ENCODE measurements at regions of chr6 and their contacts with region 1.

Region 1: GRCh38 chr6:14734416-14735340 is 511.2 kb upstream of the JARID2 start:
- DNase-seq: peak; percentile 35
- H3K4me3 Mint-ChIP-seq: peak overlapping the region; percentile 62
- H3K27ac Mint-ChIP-seq: peak overlapping the region; percentile 96
- H3K4me1 Mint-ChIP-seq: peaks cover 96% of the 10 kb centered on the region
- H3K27me3 Mint-ChIP-seq: no peaks in the 10 kb centered on the region

Region 2: DNA sequence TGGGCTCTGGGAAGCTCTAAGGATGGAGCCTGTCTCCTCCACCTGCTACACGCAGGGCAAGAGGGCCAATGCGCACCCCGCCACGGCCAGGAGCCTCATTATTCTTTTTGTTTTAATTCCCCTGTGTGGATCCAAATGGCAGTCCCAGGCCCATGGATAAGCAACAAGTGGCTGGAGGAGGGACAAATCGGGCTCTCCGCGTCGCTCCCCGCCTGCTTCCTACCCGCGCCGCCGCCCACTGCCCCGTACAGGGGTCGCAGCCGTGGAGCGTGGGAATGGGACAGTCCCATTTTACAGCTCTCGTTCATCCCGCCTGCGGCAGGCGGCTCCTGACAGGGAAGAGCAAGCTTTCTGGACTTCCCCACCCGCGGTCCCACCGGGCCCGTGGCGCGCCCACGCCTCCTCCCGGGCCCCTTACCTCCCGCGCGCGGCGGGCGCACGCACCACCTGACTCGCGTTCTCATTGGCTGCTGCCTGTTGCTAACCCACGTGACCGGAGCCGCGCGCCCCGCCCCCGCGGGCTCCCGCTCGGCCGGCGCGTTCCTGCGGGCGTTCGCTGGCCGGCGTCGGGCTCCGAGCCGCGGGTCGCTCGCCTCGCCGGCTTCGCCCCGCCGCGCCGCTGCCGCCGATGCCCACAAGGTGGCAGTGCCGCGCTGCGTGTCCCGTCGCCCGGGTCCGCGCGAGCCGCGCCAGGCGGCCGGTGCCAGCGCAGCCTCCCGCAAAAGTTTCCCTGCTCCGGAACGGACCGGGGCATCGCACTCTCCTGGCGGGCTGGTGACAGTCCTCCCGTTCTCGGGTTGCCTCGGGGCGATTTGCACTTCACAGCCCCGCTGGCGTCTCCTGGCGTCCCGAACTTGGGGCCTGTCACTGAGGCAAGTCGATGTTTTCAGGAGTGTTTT is 523.8 kb before region 1 on chr6:
- intact Hi-C with region 1: loop called (anchors 1 kb)
- DNase-seq: peak; percentile 92
- H3K4me3 Mint-ChIP-seq: peak overlapping the region; percentile 78
- H3K27ac Mint-ChIP-seq: peak overlapping the region; percentile 83
- H3K4me1 Mint-ChIP-seq: peaks cover 40% of the 10 kb centered on the region
- H3K27me3 Mint-ChIP-seq: no peaks in the 10 kb centered on the region

Region 3: GRCh38 chr6:14542670-14543366 is 191.9 kb before region 1 on chr6:
- intact Hi-C with region 1: loop called (anchors 2 kb)
- DNase-seq: peak; percentile 23
- H3K4me3 Mint-ChIP-seq: no peak overlapping the region
- H3K27ac Mint-ChIP-seq: peak overlapping the region; percentile 76
- H3K4me1 Mint-ChIP-seq: peaks cover 31% of the 10 kb centered on the region
- H3K27me3 Mint-ChIP-seq: no peaks in the 10 kb centered on the region

Region 4: GRCh38 chr6:14660806-14661579 is 73.7 kb before region 1 on chr6:
- intact Hi-C with region 1: loop called (anchors 2 kb)
- DNase-seq: peak; percentile 52
- H3K4me3 Mint-ChIP-seq: no peak overlapping the region
- H3K27ac Mint-ChIP-seq: no peak overlapping the region
- H3K4me1 Mint-ChIP-seq: peaks cover 35% of the 10 kb centered on the region
- H3K27me3 Mint-ChIP-seq: no peaks in the 10 kb centered on the region

Region 5: GRCh38 chr6:14857501-14857900 is 122.8 kb after region 1 on chr6:
- intact Hi-C with region 1: loop called (anchors 1 kb)
- DNase-seq: peak; percentile 18
- H3K4me3 Mint-ChIP-seq: peak overlapping the region; percentile 19
- H3K27ac Mint-ChIP-seq: peak overlapping the region; percentile 92
- H3K4me1 Mint-ChIP-seq: peaks cover 46% of the 10 kb centered on the region
- H3K27me3 Mint-ChIP-seq: no peaks in the 10 kb centered on the region

Region 6: GRCh38 chr6:15245361-15246216 is 510.9 kb after region 1 on chr6 and contains the start of gene JARID2:
- intact Hi-C with region 1: loop called (anchors 2 kb)
- DNase-seq: peak; percentile 93
- H3K4me3 Mint-ChIP-seq: peak within 1 kb of the TSS; percentile 99
- H3K27ac Mint-ChIP-seq: peak within 1 kb of the TSS; percentile 99
- H3K4me1 Mint-ChIP-seq: peaks cover 30% of the 10 kb centered on the region
- H3K27me3 Mint-ChIP-seq: no peaks in the 10 kb centered on the region
- total RNA-seq, gene JARID2: 55.9 and 57.7 TPM in 2 replicates

Region 7: DNA sequence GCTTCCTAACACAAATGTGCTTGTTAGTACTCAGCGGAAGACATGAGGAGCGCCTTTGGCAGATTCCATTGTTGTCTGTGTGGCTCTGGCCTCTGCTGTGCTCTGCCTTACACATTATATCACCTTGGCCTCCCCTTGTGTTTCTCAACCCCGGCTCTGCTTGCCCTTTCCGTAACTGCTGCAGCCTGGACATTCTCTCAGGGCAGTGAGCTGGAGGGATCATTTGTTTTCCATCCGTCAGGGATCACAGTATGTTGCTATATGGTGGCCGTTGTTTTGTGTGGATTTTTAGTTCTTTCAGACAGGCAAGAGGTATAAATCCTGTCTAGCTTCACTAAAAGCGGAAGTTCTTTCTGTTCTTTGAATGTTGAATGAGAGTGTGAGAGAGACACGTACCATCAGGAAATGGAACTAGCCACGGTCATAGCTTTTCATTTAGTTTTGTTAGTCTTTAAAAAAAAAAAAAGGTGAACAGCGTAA is 686.3 kb after region 1 on chr6:
- intact Hi-C with region 1: loop called (anchors 10 kb)
- DNase-seq: no peak
- H3K4me3 Mint-ChIP-seq: peak overlapping the region; percentile 53
- H3K27ac Mint-ChIP-seq: peak overlapping the region; percentile 89
- H3K4me1 Mint-ChIP-seq: peaks cover 68% of the 10 kb centered on the region
- H3K27me3 Mint-ChIP-seq: no peaks in the 10 kb centered on the region